Common myeloid progenitor, CD34-positive (primary cell): ENCODE measurements at regions of chr4 and their contacts with region 1.

Region 1: DNA sequence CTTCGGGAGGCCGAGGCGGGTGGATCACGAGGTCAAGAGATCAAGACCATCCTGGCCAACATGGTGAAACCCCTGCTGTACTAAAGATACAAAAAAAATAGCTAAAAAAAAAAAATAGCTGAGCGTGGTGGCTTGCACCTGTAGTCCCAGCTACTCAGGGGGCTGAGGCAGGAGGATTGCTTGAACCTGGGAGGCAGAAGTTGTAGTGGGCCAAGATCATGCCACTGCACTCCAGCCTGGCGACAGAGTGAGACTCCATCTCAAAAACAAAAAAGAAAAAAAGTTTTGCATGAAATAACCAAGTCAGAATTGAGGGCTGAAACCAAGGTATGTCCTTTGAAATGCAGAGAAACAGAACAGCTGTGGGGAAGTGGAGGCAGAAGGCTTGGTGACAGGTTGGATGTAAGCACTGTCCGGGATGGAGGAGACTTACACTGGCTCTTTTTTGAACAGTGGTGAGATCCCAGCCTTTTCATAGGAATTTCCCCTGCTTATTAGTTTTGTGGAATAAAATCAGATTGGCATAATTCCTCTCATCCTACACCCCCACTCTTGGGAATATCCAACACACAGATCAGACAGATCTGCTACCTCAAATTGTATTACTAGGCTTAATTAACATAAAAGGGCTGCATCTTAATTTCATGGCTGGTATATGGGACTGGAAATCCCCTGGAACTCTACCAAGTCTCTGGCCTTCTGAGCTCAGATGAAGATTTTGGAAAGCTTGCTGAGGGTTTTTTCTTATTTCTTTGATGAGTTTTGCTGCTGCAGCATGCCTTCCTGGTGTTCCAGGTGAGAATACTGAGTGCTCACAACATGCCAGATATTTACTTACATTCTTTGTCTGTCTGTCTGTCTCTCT is 18.8 kb upstream of the C4orf36 start:
- DNase-seq: peak in 2 of 3 donors; percentile 61 to 68
- H3K4me3 ChIP-seq: no peak overlapping the region
- H3K27ac ChIP-seq: no peak overlapping the region
- H3K4me1 ChIP-seq: peaks cover 3 to 44% (median 33%) of the 10 kb centered on the region in 4 experiments
- H3K27me3 ChIP-seq: no peaks in the 10 kb centered on the region

Region 2: GRCh38 chr4:86848732-86849619 is 62.1 kb before region 1 on chr4 and contains the start of gene SLC10A6:
- CTCF ChIA-PET with region 1: no interaction called
- POLR2A ChIA-PET with region 1: no interaction called
- DNase-seq: no peak
- H3K4me3 ChIP-seq: no peak within 1 kb of the TSS
- H3K27ac ChIP-seq: no peak within 1 kb of the TSS
- H3K4me1 ChIP-seq: no peaks in the 10 kb centered on the region
- H3K27me3 ChIP-seq: no peaks in the 10 kb centered on the region

Region 3: DNA sequence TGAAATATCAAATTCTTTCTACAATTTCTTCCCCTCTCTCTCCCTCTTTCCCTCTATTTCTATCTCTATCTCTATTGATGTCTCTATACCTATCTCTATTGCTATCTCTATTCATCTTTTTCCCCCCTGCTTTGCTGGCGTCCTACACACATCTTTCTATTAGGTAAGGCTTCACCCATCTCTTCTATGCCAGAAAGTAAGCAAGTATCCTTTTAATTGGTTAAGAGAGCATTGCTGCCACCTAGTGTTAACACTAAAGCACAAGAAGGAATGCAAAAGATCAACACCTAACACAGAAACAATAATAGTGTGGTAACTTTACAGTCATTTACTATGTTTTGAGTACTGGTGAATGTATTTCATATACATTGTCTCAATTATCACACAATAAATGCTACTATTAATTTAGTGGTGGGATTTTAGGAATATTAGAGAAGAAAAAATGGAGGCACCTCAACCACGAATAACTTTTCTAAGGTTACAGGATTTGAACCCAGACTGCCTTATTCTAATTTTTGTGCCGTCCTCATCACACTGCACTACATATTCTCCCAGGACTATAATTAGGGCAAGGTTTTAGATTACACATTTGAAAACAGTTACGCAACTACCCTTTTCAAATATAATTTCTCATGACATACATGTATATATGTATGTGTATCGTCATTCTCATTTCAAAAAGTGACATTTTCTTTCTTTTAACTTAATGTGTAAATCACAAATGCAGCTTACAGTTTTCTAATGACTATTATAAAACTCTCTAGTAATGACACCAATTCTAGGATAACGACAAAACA is 15.2 kb before region 1 on chr4:
- CTCF ChIA-PET with region 1: interaction called, 15 read pairs
- POLR2A ChIA-PET with region 1: interaction called, 6 read pairs
- DNase-seq: peak; percentile 68 to 85 (median 82)
- H3K4me3 ChIP-seq: no peak overlapping the region
- H3K27ac ChIP-seq: no peak overlapping the region
- H3K4me1 ChIP-seq: peaks cover 0 to 12% (median 11%) of the 10 kb centered on the region in 4 experiments
- H3K27me3 ChIP-seq: peaks cover 0 to under 1% (median 0%) of the 10 kb centered on the region in 5 experiments